ENCODE measurements at regions of chr17 and their contacts with region 1.

Region 1: DNA sequence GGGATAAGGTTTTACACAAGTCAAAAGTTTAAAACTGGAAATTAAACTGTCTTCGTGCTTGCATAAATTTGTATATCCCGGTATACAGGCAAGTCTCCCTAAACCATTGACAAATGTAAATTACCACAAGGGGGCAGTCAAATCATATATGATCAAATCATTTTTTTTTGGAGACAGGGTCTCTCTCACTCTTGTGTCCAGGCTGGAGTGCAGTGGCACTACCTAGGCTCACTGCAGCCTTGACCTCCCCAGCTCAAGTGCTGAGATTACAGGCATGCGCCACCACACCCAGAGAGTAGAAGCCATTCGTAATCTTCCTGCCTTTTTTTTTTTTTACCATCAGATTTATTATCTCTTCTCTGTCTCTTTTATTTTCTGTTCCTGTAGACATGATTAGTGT is 18.5 kb downstream of the TOP2A start:
- DNase-seq: peak in 4 of 35 experiments; percentile 11 to 77 (median 13)
- ATAC-seq: peak in 3 of 4 experiments; percentile 29 to 74 (median 54)
- H3K4me3 ChIP-seq: no peak overlapping the region
- H3K4me3 Mint-ChIP-seq: no peak overlapping the region
- H3K27ac ChIP-seq: no peak overlapping the region
- H3K27ac Mint-ChIP-seq: peak overlapping the region in 1 of 2 donors; percentile 70
- H3K4me1 ChIP-seq: peaks cover 0 to 2% of the 10 kb centered on the region in 2 experiments
- H3K4me1 Mint-ChIP-seq: peaks cover 14 to 28% (median 22%) of the 10 kb centered on the region in 3 donors
- H3K27me3 ChIP-seq: no peaks in the 10 kb centered on the region
- H3K27me3 Mint-ChIP-seq: no peaks in the 10 kb centered on the region

Region 2: DNA sequence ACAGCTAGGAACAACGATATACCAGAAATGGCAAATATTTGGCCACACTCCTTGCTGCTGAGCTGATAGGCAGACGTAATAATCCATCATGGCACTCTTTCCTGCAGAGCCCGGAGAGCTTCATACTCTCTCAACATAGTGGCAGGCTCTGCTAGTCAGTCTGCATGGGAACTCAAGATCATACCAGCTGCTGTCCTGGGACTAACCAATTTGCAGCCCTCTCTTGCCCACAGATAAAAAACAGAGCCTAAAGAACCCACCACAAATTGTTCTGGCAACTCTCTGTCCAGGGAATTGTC is 494.2 kb before region 1 on chr17:
- CTCF ChIA-PET with region 1: interaction called in 1 of 2 experiments, 12 read pairs
- POLR2A ChIA-PET with region 1: no interaction called
- DNase-seq: no peak
- ATAC-seq: no peak
- H3K4me3 ChIP-seq: no peak overlapping the region
- H3K4me3 Mint-ChIP-seq: no peak overlapping the region
- H3K27ac ChIP-seq: no peak overlapping the region
- H3K27ac Mint-ChIP-seq: no peak overlapping the region
- H3K4me1 ChIP-seq: peaks cover 6 to 18% of the 10 kb centered on the region in 2 experiments
- H3K4me1 Mint-ChIP-seq: peaks cover 13 to 24% (median 23%) of the 10 kb centered on the region in 3 donors
- H3K27me3 ChIP-seq: no peaks in the 10 kb centered on the region
- H3K27me3 Mint-ChIP-seq: no peaks in the 10 kb centered on the region

Region 3: DNA sequence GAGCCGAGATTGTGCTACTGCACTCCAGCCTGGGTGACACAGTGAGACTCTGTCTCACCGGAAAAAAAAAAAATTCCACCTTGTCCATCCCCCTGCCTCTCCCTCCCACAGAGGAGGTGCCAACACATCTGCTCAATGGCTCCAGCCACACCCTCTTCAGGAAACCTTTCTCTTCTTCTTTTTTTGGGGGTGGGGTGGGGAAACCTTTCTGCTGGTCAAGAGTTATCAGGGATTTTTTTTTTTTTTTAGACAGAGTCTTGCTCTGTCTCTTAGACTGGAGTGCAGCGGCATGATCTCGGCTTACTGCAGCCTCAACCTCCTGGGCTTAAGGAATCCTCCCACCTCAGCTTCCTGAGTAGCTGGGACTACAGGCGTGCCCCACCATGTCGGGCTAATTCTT is 83.5 kb after region 1 on chr17:
- CTCF ChIA-PET with region 1: no interaction called
- POLR2A ChIA-PET with region 1: no interaction called
- DNase-seq: no peak
- ATAC-seq: no peak
- H3K4me3 ChIP-seq: no peak overlapping the region
- H3K4me3 Mint-ChIP-seq: no peak overlapping the region
- H3K27ac ChIP-seq: peak overlapping the region; percentile 99
- H3K27ac Mint-ChIP-seq: peak overlapping the region; percentile 75 to 98
- H3K4me1 ChIP-seq: peaks cover 15 to 76% of the 10 kb centered on the region in 2 experiments
- H3K4me1 Mint-ChIP-seq: peaks cover 72 to 88% (median 76%) of the 10 kb centered on the region in 3 donors
- H3K27me3 ChIP-seq: peaks cover 0 to 2% of the 10 kb centered on the region in 2 experiments
- H3K27me3 Mint-ChIP-seq: no peaks in the 10 kb centered on the region